ENCODE measurements at regions of chr11 and their contacts with region 1.

Region 1: DNA sequence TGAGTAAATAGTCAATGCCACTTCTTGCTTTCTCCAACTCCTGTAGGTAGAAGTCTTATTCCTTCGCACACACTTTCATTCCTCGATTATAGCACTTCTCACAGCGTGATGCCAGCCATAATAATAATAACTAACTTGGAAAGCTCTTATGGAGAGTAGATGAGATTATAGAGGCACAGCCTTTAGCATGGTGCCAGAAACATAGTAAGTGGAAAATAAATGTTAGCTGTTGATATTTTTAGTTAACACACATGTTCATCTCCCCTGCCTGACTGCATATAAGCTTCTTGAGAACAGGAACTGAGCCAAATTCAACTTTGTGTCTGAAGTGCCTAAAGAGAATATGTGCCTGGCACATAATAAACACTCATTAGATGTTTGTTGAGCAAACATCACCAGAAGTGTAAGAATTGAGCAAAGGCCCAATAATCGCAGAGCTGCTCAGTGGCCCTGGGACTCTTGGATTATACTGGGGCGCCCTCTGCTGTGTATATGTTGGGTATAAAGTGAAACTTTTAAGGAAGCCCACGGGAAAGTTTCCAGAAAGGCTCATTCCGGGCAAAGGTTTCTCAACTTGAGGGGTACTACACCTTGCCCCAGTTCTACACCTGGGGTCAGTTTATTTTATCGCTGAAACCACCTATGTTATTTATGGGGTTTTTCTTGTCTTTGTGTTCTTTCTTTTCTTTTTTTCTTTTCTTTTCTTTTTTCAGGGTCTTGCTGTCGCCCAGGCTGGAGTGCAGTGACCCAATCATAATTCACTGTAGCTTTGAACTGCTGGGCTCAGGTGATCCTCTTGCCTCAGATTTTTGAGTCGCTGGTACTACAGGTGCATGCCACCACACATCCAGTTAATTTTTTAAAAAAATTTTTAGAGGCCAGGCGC is 22.3 kb downstream of the SLN start:
- DNase-seq: peak; percentile 17
- H3K4me3 Mint-ChIP-seq: no peak overlapping the region
- H3K27ac Mint-ChIP-seq: no peak overlapping the region
- H3K4me1 Mint-ChIP-seq: no peaks in the 10 kb centered on the region
- H3K27me3 Mint-ChIP-seq: peaks cover 11% of the 10 kb centered on the region

Region 2: DNA sequence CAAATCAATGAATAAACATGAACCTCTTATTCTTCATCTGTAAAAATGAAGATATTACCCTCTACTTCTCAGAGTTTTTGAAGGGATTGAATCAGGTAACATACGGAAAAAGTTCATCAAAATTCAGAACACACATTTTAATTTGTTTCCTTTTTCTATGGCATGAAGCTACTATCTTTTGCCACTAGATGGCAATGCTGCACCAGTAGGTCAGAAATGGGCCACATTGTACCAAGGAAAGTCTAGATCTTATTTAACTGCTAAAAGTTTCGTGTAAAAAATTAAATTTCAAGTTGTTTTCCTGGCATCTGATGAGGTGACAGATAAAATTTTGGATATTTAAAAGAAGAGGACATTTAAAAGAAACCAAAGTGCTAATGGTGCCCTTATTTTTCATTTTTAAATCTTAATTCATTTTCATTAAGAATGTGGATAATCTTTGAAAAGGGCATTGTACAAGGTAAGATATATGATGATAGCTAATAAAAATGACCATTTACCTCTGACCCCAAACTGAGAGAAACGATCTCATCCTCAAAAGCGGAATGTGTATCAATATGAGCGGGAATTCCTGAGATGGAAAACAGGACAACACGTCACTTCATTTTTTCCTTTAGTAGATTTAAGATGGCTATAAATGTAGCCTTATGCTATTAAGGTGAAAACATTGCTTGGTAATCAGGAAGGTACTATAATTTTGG is 140.2 kb before region 1 on chr11:
- intact Hi-C with region 1: loop called (anchors 1 kb)
- DNase-seq: no peak
- H3K4me3 Mint-ChIP-seq: no peak overlapping the region
- H3K27ac Mint-ChIP-seq: no peak overlapping the region
- H3K4me1 Mint-ChIP-seq: peaks cover 4% of the 10 kb centered on the region
- H3K27me3 Mint-ChIP-seq: no peaks in the 10 kb centered on the region

Region 3: GRCh38 chr11:107573438-107573837 is 116.1 kb before region 1 on chr11:
- intact Hi-C with region 1: loop called (anchors 1 kb)
- DNase-seq: no peak
- H3K4me3 Mint-ChIP-seq: no peak overlapping the region
- H3K27ac Mint-ChIP-seq: no peak overlapping the region
- H3K4me1 Mint-ChIP-seq: peaks cover 2% of the 10 kb centered on the region
- H3K27me3 Mint-ChIP-seq: peaks cover 10% of the 10 kb centered on the region

Region 4: GRCh38 chr11:107651672-107652071 is 37.9 kb before region 1 on chr11:
- intact Hi-C with region 1: no loop called
- DNase-seq: no peak
- H3K4me3 Mint-ChIP-seq: no peak overlapping the region
- H3K27ac Mint-ChIP-seq: no peak overlapping the region
- H3K4me1 Mint-ChIP-seq: no peaks in the 10 kb centered on the region
- H3K27me3 Mint-ChIP-seq: peaks cover 17% of the 10 kb centered on the region

Measured in activated T-helper 2 cell treated with anti-CD3 and anti-CD28 coated beads, Interferon-gamma antibody, Interleukin-2, Interleukin-4, amounts not matched to agents 10 μg/mL and 5 μg/mL and 100 μg/mL, durations not matched to agents 14 hours and 24 hours and 36 hours (primary cell).